ENCODE measurements at regions of chr21 and their contacts with region 1.

Region 1: GRCh38 chr21:36209626-36210171 is 53.1 kb downstream of the DOP1B start:
- DNase-seq: peak; percentile 70
- ATAC-seq: peak; percentile 43
- H3K4me3 Mint-ChIP-seq: no peak overlapping the region
- H3K27ac Mint-ChIP-seq: no peak overlapping the region
- H3K4me1 Mint-ChIP-seq: peaks cover 15% of the 10 kb centered on the region
- H3K27me3 Mint-ChIP-seq: no peaks in the 10 kb centered on the region

Region 2: DNA sequence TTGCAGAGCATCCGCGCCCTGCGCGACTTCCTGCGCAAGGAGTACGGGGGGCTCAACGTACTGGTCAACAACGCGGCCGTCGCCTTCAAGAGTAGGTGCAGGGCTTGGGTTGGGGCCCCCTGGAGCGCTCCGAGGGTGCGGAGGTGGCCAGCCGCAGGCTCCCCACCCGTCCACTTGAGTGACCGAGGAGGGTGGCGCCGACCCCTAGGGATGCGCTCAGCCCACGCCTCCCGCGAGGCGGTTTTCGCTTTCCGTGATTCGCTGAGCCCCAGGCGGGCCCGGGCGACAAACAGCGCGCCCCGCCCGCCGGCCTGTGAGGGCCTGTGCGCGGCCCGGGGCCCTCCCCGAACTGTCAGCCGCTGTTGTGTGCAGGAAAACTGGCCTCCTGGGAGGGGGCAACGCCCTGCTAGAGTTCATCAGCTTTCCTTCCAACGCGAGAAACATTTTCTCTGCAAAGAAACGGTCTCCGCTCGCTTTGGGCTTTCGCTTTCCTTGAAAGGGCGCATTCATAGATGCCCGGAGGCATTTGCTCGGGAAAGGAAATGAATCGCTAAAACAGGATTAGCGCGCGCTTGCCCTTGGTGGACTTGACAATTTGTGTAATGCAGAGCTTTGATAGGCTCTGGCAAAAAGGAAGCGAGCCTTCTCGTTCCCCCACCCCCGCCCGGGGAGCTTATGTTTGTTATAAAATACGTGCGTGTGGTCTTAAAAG is 74.2 kb before region 1 on chr21:
- CTCF ChIA-PET with region 1: interaction called, 10 read pairs
- POLR2A ChIA-PET with region 1: no interaction called
- intact Hi-C with region 1: no loop called
- DNase-seq: peak; percentile 78
- ATAC-seq: peak; percentile 73
- H3K4me3 Mint-ChIP-seq: peak overlapping the region; percentile 87
- H3K27ac Mint-ChIP-seq: peak overlapping the region; percentile 78
- H3K4me1 Mint-ChIP-seq: peaks cover 22% of the 10 kb centered on the region
- H3K27me3 Mint-ChIP-seq: no peaks in the 10 kb centered on the region

Region 3: GRCh38 chr21:36141513-36141925 is 68.2 kb before region 1 on chr21:
- CTCF ChIA-PET with region 1: interaction called, 10 read pairs
- POLR2A ChIA-PET with region 1: no interaction called
- intact Hi-C with region 1: loop called (anchors 1 kb)
- DNase-seq: peak; percentile 92
- ATAC-seq: peak; percentile 96
- H3K4me3 Mint-ChIP-seq: no peak overlapping the region
- H3K27ac Mint-ChIP-seq: peak overlapping the region; percentile 29
- H3K4me1 Mint-ChIP-seq: peaks cover 25% of the 10 kb centered on the region
- H3K27me3 Mint-ChIP-seq: no peaks in the 10 kb centered on the region

Region 4: DNA sequence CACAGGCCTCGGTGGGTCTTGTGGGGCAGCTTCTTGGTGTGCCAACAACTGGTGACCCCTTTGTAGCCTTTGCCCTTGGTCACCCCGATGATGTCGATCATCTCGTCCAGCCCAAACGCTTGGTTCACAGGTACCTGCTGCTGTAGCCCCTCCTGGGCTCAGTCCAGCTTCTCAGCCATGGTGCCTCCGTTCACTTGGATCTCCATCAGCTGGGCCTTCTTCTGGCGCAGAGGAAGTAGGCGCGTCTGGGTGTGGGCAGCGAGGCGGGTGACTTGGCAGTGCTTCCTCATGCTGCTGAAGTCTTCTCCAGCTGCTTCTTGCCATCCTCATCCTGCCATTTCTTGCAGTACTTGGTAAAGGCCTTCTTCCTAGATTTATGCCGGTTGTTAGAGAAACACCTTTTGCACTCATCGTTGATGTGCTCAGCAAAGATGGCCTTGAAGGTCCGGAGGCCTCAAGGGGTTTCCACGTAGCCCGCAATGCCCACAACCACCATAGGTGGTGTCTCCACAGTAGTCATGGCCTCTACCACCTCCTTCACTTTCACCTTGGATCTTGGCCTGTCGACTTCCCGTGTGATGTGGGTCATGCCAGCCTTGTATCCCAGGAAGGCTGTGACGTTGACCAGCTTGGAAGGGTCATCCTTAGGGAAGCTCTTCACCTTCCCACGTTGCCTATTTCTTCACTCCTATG is 40.1 kb before region 1 on chr21:
- CTCF ChIA-PET with region 1: no interaction called
- POLR2A ChIA-PET with region 1: no interaction called
- intact Hi-C with region 1: loop called in 1 of 2 experiments (anchors 5 kb)
- DNase-seq: peak; percentile 31
- ATAC-seq: no peak
- H3K4me3 Mint-ChIP-seq: no peak overlapping the region
- H3K27ac Mint-ChIP-seq: no peak overlapping the region
- H3K4me1 Mint-ChIP-seq: peaks cover 4% of the 10 kb centered on the region
- H3K27me3 Mint-ChIP-seq: no peaks in the 10 kb centered on the region

Region 5: DNA sequence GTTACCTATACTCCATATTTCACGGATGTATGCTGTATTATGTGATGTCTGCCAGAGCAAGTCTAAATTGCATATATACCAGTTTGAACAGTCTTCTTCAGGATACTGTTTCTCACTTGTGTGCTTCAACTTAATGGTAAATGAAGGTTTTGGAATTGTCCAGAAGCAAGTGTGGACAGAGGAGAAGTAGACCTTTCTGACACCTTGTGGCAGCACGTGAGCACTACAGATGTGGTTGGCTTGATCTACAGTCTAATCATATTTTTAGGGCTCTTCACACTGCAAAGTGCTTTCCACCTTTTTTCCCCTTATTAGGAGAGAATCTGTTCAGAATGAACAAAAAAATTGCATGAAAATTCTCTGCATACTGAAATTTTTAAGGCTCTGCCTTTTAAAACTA is 121.2 kb after region 1 on chr21:
- CTCF ChIA-PET with region 1: interaction called, 4 read pairs
- POLR2A ChIA-PET with region 1: no interaction called
- intact Hi-C with region 1: loop called in 1 of 2 experiments (anchors 5 kb)
- DNase-seq: peak; percentile 67
- ATAC-seq: peak; percentile 92
- H3K4me3 Mint-ChIP-seq: no peak overlapping the region
- H3K27ac Mint-ChIP-seq: no peak overlapping the region
- H3K4me1 Mint-ChIP-seq: peaks cover 42% of the 10 kb centered on the region
- H3K27me3 Mint-ChIP-seq: no peaks in the 10 kb centered on the region

Measured in activated CD4-positive, alpha-beta T cell treated with anti-CD3 and anti-CD28 coated beads for 36 hours (primary cell).